H1 (cell line): ENCODE measurements at regions of chr15 and their contacts with region 1.

Region 1: GRCh38 chr15:89416141-89416853 is 80.1 kb downstream of the RHCG start:
- DNase-seq: peak; percentile 95 to 100
- H3K4me3 ChIP-seq: peak overlapping the region; percentile 34 to 64 (median 56)
- H3K27ac ChIP-seq: no peak overlapping the region
- H3K4me1 ChIP-seq: peaks cover 9 to 26% (median 14%) of the 10 kb centered on the region in 4 experiments
- H3K27me3 ChIP-seq: peaks cover 32 to 90% (median 77%) of the 10 kb centered on the region in 4 experiments
- CTCF ChIP-seq: peak; percentile 89 to 100 (median 99)
- EP300 ChIP-seq: no peak
- POLR2A ChIP-seq: no peak
- RAD21 ChIP-seq: peak; percentile 67 to 74

Region 2: DNA sequence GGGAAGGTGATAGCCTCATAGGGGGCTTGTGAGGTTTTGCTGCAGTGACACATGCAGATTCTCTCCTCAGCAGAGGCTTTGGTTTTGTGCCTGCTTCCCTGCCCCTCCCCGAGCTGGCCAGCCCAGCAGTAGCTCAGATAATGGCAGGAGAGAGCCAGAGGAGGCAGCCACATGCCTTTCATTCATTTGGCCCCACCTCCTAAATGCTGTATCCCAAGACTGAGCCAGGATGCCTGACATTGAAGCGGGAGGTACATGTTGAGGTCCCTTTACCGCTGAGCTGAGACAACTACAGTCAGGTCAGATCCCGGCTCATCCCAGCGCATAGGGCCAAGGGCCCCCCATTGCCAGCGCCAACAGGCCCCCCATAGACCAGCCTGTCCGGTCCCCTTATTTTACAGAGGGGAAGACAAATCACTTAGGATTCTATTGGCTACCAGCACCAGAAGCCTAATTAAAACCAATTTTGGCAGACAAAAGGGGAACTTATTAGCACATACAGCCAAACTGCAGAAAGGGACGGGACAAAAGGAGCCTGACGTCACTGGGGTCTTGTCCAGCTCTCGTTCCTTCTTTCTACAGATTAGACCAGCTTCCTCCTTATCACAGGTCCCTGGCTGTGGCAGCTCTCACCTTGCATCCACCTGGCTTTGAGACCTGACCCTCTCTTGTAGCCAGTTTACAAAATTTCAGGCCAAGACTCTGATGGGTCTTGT is 69.6 kb before region 1 on chr15:
- CTCF ChIA-PET with region 1: interaction called, 412 read pairs
- POLR2A ChIA-PET with region 1: interaction called, 4 read pairs
- DNase-seq: peak in 1 of 2 experiments; percentile 58
- H3K4me3 ChIP-seq: no peak overlapping the region
- H3K27ac ChIP-seq: no peak overlapping the region
- H3K4me1 ChIP-seq: peaks cover 0 to 10% (median 6%) of the 10 kb centered on the region in 4 experiments; a peak in 5 of 7 replicates
- H3K27me3 ChIP-seq: peaks cover 0 to 2% (median 0%) of the 10 kb centered on the region in 4 experiments; a peak in 1 of 7 replicates
- CTCF ChIP-seq: no peak
- EP300 ChIP-seq: no peak
- POLR2A ChIP-seq: no peak
- RAD21 ChIP-seq: no peak

Region 3: GRCh38 chr15:89367485-89368451 is 48.5 kb before region 1 on chr15:
- CTCF ChIA-PET with region 1: interaction called, 412 read pairs
- POLR2A ChIA-PET with region 1: no interaction called
- DNase-seq: peak in 1 of 2 experiments; percentile 88
- H3K4me3 ChIP-seq: peak overlapping the region in 3 of 4 experiments; percentile 14 to 50 (median 29); a peak in 5 of 8 replicates
- H3K27ac ChIP-seq: no peak overlapping the region
- H3K4me1 ChIP-seq: peaks cover 3 to 32% (median 19%) of the 10 kb centered on the region in 4 experiments
- H3K27me3 ChIP-seq: peaks cover 98 to 100% (median 100%) of the 10 kb centered on the region in 4 experiments
- CTCF ChIP-seq: no peak
- EP300 ChIP-seq: no peak
- POLR2A ChIP-seq: no peak
- RAD21 ChIP-seq: no peak

Region 4: GRCh38 chr15:89378296-89379151 is 37.8 kb before region 1 on chr15:
- CTCF ChIA-PET with region 1: interaction called, 145 read pairs
- POLR2A ChIA-PET with region 1: no interaction called
- DNase-seq: peak in 1 of 2 experiments; percentile 74
- H3K4me3 ChIP-seq: peak overlapping the region; percentile 32 to 55 (median 41)
- H3K27ac ChIP-seq: no peak overlapping the region
- H3K4me1 ChIP-seq: peaks cover 18 to 37% (median 30%) of the 10 kb centered on the region in 4 experiments
- H3K27me3 ChIP-seq: peaks cover 92 to 100% (median 98%) of the 10 kb centered on the region in 4 experiments
- CTCF ChIP-seq: no peak
- EP300 ChIP-seq: no peak
- POLR2A ChIP-seq: no peak
- RAD21 ChIP-seq: no peak

Region 5: GRCh38 chr15:89383365-89384175 is 32.7 kb before region 1 on chr15:
- CTCF ChIA-PET with region 1: interaction called, 145 read pairs
- POLR2A ChIA-PET with region 1: no interaction called
- DNase-seq: no peak
- H3K4me3 ChIP-seq: no peak overlapping the region
- H3K27ac ChIP-seq: no peak overlapping the region
- H3K4me1 ChIP-seq: peaks cover 16 to 35% (median 23%) of the 10 kb centered on the region in 4 experiments
- H3K27me3 ChIP-seq: peaks cover 43 to 93% (median 68%) of the 10 kb centered on the region in 4 experiments
- CTCF ChIP-seq: no peak
- EP300 ChIP-seq: no peak
- POLR2A ChIP-seq: no peak
- RAD21 ChIP-seq: no peak

Region 6: GRCh38 chr15:89399238-89400120 is 16.8 kb before region 1 on chr15:
- CTCF ChIA-PET with region 1: interaction called, 145 read pairs
- POLR2A ChIA-PET with region 1: interaction called, 3 read pairs
- DNase-seq: no peak
- H3K4me3 ChIP-seq: peak overlapping the region in 3 of 4 experiments; percentile 28 to 54 (median 33); a peak in 5 of 8 replicates
- H3K27ac ChIP-seq: no peak overlapping the region
- H3K4me1 ChIP-seq: peaks cover 5 to 45% (median 19%) of the 10 kb centered on the region in 4 experiments
- H3K27me3 ChIP-seq: peaks cover 93 to 99% (median 99%) of the 10 kb centered on the region in 4 experiments
- CTCF ChIP-seq: peak; percentile 52 to 74 (median 67)
- EP300 ChIP-seq: no peak
- POLR2A ChIP-seq: no peak
- RAD21 ChIP-seq: peak in 1 of 2 experiments; percentile 34; a peak in 2 of 4 replicates

Region 7: GRCh38 chr15:89430530-89431341 is 14.4 kb after region 1 on chr15:
- CTCF ChIA-PET with region 1: interaction called, 133 read pairs
- POLR2A ChIA-PET with region 1: interaction called, 5 read pairs
- DNase-seq: peak in 1 of 2 experiments; percentile 100
- H3K4me3 ChIP-seq: peak overlapping the region in 3 of 4 experiments; percentile 29 to 54 (median 41); a peak in 7 of 8 replicates
- H3K27ac ChIP-seq: no peak overlapping the region
- H3K4me1 ChIP-seq: peaks cover 0 to 9% (median 2%) of the 10 kb centered on the region in 4 experiments; a peak in 3 of 7 replicates
- H3K27me3 ChIP-seq: peaks cover 0 to 22% (median 13%) of the 10 kb centered on the region in 4 experiments; a peak in 6 of 7 replicates
- CTCF ChIP-seq: peak; percentile 97 to 99 (median 98)
- EP300 ChIP-seq: no peak
- POLR2A ChIP-seq: no peak
- RAD21 ChIP-seq: peak; percentile 84 to 90

Region 8: GRCh38 chr15:90013503-90013937 is 597.2 kb after region 1 on chr15:
- CTCF ChIA-PET with region 1: no interaction called
- POLR2A ChIA-PET with region 1: no interaction called
- DNase-seq: no peak
- H3K4me3 ChIP-seq: no peak overlapping the region
- H3K27ac ChIP-seq: no peak overlapping the region
- H3K4me1 ChIP-seq: peaks cover 0 to 7% (median 0%) of the 10 kb centered on the region in 4 experiments; a peak in 2 of 7 replicates
- H3K27me3 ChIP-seq: no peaks in the 10 kb centered on the region
- CTCF ChIP-seq: no peak
- EP300 ChIP-seq: no peak
- POLR2A ChIP-seq: no peak
- RAD21 ChIP-seq: no peak